Naive thymus-derived CD4-positive, alpha-beta T cell (primary cell): ENCODE measurements at regions of chr12 and their contacts with region 1.

Region 1: DNA sequence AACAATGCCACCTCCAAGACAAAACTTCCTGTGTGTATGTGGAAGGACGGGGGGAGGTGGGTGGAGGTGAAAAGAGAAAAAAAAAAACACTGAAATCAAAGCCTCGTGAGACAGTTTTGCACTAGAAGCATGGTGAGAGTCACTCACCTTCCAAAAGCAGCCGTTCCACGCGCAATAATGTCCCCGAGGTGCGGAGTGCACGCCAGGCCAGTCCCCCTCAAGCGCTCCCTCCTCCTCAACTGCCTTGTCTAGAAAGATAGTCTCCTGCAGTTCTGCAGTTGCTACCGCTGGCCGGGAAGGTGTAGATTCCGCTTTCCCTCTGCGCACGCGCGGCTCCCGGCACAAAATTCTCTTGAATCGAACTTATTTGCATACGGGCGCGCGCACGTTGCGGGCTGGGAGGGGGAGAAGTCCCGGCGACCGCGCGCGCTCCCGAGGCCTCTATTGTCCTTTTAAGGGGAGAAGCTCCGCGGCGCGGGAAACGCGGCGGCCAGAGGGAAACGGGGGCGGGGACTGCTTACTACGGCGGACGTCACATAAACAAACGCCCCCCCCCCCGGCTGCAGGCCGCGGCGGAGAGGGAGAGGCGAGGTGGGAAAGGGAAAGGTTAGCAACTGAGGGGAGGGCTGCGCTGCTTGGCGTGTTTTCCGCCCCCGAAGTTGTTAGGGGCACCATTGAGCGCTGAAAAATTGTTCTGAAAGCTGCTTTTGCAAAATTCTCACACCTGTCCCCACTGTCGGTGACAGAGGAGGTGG is at the start of gene SINHCAF:
- DNase-seq: peak; percentile 97 to 99 (median 98)
- ATAC-seq: peak; percentile 78
- H3K4me3 ChIP-seq: peak within 1 kb of the TSS; percentile 82
- H3K4me3 Mint-ChIP-seq: peak within 1 kb of the TSS; percentile 89 to 99 (median 96)
- H3K27ac ChIP-seq: peak within 1 kb of the TSS; percentile 93
- H3K27ac Mint-ChIP-seq: peak within 1 kb of the TSS; percentile 81 to 99 (median 93)
- H3K4me1 ChIP-seq: peaks cover 5 to 22% of the 10 kb centered on the region in 2 donors
- H3K4me1 Mint-ChIP-seq: peaks cover 20 to 37% (median 26%) of the 10 kb centered on the region in 7 donors
- H3K27me3 ChIP-seq: no peaks in the 10 kb centered on the region
- H3K27me3 Mint-ChIP-seq: peaks cover 0 to 17% (median 0%) of the 10 kb centered on the region in 5 donors
- total RNA-seq, gene SINHCAF: 80.5 to 114 (median 90.8) TPM

Region 2: DNA sequence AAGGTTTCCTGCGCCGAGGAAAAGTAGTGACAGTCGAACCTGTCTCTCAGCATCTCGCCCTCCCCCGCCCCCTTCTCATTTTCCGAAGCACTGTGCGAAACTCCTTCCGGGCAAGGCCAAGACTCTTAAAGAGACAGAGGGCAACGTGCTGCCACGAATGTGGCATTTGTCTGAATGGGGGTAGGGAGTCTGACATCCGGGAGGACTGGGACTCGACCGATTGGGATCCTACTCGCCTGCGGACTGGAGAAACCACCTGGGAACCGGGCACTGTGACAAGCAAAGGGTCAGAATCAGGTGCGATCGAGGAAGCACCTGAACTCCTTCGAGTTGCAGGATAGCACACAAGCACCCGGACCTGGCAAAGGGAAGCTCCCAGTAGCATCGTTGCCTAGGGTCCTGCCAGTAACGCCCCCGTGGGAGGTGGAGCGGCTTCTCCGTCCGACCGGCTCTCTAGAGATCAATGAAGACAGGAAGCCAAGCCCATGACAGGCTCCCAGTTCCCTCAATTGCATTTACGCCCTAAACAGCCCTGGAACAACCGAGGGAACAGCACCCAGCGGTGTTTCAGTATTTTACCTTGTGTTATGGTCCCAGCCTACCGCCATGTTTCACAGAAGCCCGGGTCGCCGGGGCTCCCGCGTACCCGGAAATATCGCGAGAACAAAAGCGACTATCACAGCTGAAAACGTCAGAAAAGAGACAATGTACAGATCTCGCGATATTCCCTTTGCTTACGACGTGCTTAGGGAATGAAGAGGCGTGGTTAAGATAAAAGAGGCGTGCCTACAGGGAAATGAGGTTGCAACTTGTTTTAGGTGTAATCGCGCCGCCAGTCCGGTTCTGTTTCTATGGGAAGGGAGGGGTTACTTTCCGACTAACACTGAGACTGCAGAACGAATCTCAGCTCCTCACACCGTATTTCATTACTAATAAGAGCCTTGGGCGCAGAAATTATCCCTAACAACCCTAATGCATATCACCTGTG is 1945.2 kb before region 1 on chr12 and contains the start of gene ERGIC2:
- CTCF ChIA-PET with region 1: no interaction called
- POLR2A ChIA-PET with region 1: interaction called, 3 read pairs
- intact Hi-C with region 1: loop called (anchors 1 to 2 kb)
- DNase-seq: peak; percentile 63 to 97 (median 95)
- ATAC-seq: peak; percentile 97
- H3K4me3 ChIP-seq: peak within 1 kb of the TSS; percentile 98
- H3K4me3 Mint-ChIP-seq: peak within 1 kb of the TSS; percentile 88 to 97 (median 94)
- H3K27ac ChIP-seq: peak within 1 kb of the TSS; percentile 91
- H3K27ac Mint-ChIP-seq: peak within 1 kb of the TSS; percentile 92 to 98 (median 96)
- H3K4me1 ChIP-seq: peaks cover 9 to 12% of the 10 kb centered on the region in 2 donors
- H3K4me1 Mint-ChIP-seq: peaks cover 20 to 63% (median 46%) of the 10 kb centered on the region in 7 donors
- H3K27me3 ChIP-seq: no peaks in the 10 kb centered on the region
- H3K27me3 Mint-ChIP-seq: no peaks in the 10 kb centered on the region
- total RNA-seq, gene ERGIC2: 36.0 to 85.7 (median 78.6) TPM

Region 3: GRCh38 chr12:31274520-31275300 is 51.3 kb before region 1 on chr12:
- CTCF ChIA-PET with region 1: interaction called, 3 read pairs
- POLR2A ChIA-PET with region 1: no interaction called
- intact Hi-C with region 1: loop called (anchors 2 to 5 kb)
- DNase-seq: no peak
- ATAC-seq: no peak
- H3K4me3 ChIP-seq: no peak overlapping the region
- H3K4me3 Mint-ChIP-seq: no peak overlapping the region
- H3K27ac ChIP-seq: no peak overlapping the region
- H3K27ac Mint-ChIP-seq: peak overlapping the region in 5 of 9 donors; percentile 25 to 88 (median 51)
- H3K4me1 ChIP-seq: no peaks in the 10 kb centered on the region
- H3K4me1 Mint-ChIP-seq: peaks cover 0 to 7% (median 0%) of the 10 kb centered on the region in 7 donors
- H3K27me3 ChIP-seq: no peaks in the 10 kb centered on the region
- H3K27me3 Mint-ChIP-seq: no peaks in the 10 kb centered on the region

Region 4: DNA sequence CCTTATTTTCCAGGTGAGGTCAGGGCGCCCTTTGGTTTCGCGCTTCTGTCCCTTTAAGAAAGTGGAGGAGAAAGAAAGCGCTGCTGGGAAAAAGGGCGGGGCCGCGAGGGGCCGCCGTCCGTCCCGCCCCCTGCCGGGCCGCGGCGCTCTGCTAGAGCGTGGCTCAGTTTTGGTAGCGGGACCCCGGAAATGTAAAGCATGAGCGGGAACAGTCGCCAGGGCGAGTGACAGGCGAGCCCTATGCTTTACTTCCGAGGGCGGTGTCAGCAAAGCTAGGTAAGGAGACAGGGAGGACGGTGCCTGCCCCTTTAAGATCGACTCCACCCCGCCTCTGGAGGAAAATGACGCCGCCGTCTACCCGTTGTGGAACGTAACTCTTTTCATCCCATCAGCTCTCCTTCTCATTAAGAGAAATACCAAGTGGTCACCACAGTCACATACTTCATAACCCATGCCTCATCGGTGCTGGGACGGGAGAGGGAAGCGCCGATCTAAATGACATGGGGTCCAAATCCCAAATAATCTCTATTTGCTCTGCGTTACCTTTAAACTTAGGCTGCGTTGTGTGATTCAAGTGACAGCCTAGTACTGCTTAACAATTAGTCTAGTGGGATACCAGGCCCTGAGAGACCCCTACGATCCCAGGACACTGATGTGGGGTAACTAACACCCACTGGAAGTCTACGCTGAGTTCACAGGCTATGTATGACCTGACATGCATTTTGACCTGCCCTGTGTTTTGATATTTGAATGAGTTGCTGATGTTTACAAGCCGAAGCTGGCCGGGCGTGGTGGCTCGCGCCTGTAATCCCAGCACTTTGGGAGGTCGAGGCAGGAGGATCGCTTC is 333.3 kb after region 1 on chr12 and contains the start of gene ETFBKMT:
- CTCF ChIA-PET with region 1: no interaction called
- POLR2A ChIA-PET with region 1: no interaction called
- intact Hi-C with region 1: loop called (anchors 1 to 2 kb)
- DNase-seq: peak; percentile 85 to 95 (median 93)
- ATAC-seq: peak; percentile 99
- H3K4me3 ChIP-seq: peak within 1 kb of the TSS; percentile 85
- H3K4me3 Mint-ChIP-seq: peak within 1 kb of the TSS; percentile 81 to 99 (median 96)
- H3K27ac ChIP-seq: peak within 1 kb of the TSS; percentile 90
- H3K27ac Mint-ChIP-seq: peak within 1 kb of the TSS; percentile 91 to 100 (median 97)
- H3K4me1 ChIP-seq: peaks cover 0 to 10% of the 10 kb centered on the region in 2 donors
- H3K4me1 Mint-ChIP-seq: peaks cover 3 to 36% (median 24%) of the 10 kb centered on the region in 7 donors
- H3K27me3 ChIP-seq: no peaks in the 10 kb centered on the region
- H3K27me3 Mint-ChIP-seq: no peaks in the 10 kb centered on the region
- total RNA-seq, gene ETFBKMT: 0.92 to 2.0 (median 1.9) TPM

Region 5: DNA sequence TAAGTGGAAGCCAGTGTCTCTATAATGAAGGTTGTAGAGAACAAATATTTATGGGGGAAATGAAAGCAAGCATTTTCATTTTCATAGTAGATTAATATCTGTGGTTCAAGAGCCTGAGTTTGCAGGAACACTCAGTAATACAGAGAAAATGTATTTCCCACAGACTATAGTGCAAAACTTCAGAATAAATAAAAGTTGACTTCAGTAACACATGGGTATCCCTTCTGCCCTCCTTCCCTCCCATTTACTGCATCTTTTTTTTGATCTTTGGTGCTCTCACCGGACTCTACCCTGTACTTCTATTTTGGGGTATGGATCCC is 478.1 kb after region 1 on chr12:
- CTCF ChIA-PET with region 1: no interaction called
- POLR2A ChIA-PET with region 1: no interaction called
- intact Hi-C with region 1: loop called in 1 of 2 experiments (anchors 10 kb)
- DNase-seq: no peak
- ATAC-seq: no peak
- H3K4me3 ChIP-seq: peak overlapping the region; percentile 32
- H3K4me3 Mint-ChIP-seq: peak overlapping the region; percentile 33 to 91 (median 82)
- H3K27ac ChIP-seq: no peak overlapping the region
- H3K27ac Mint-ChIP-seq: peak overlapping the region; percentile 58 to 95 (median 88)
- H3K4me1 ChIP-seq: peaks cover 0 to 41% of the 10 kb centered on the region in 2 donors
- H3K4me1 Mint-ChIP-seq: peaks cover 26 to 67% (median 61%) of the 10 kb centered on the region in 7 donors
- H3K27me3 ChIP-seq: no peaks in the 10 kb centered on the region
- H3K27me3 Mint-ChIP-seq: no peaks in the 10 kb centered on the region

Region 6: GRCh38 chr12:32273712-32274111 is 947.7 kb after region 1 on chr12:
- CTCF ChIA-PET with region 1: no interaction called
- POLR2A ChIA-PET with region 1: no interaction called
- intact Hi-C with region 1: loop called in 1 of 2 experiments (anchors 2 kb)
- DNase-seq: peak in 8 of 9 donors; percentile 16 to 69 (median 56)
- ATAC-seq: peak; percentile 94
- H3K4me3 ChIP-seq: peak overlapping the region; percentile 3
- H3K4me3 Mint-ChIP-seq: peak overlapping the region; percentile 66 to 82 (median 74)
- H3K27ac ChIP-seq: peak overlapping the region; percentile 65
- H3K27ac Mint-ChIP-seq: peak overlapping the region; percentile 74 to 99 (median 97)
- H3K4me1 ChIP-seq: peaks cover 0 to 15% of the 10 kb centered on the region in 2 donors
- H3K4me1 Mint-ChIP-seq: peaks cover 13 to 32% (median 29%) of the 10 kb centered on the region in 7 donors
- H3K27me3 ChIP-seq: no peaks in the 10 kb centered on the region
- H3K27me3 Mint-ChIP-seq: no peaks in the 10 kb centered on the region